ENCODE measurements at regions of chr11 and their contacts with region 1.

Region 1: GRCh38 chr11:28464252-28464867 is 356.2 kb downstream of the METTL15 start:
- DNase-seq: no peak
- ATAC-seq: no peak
- H3K4me3 ChIP-seq: no peak overlapping the region
- H3K27ac ChIP-seq: no peak overlapping the region
- H3K4me1 ChIP-seq: no peaks in the 10 kb centered on the region
- H3K27me3 ChIP-seq: no peaks in the 10 kb centered on the region
- CTCF ChIP-seq: no peak

Region 2: GRCh38 chr11:28481616-28482480 is 17.5 kb after region 1 on chr11:
- intact Hi-C with region 1: loop called in 1 of 10 experiments (anchors 2 kb)
- DNase-seq: no peak
- ATAC-seq: no peak
- H3K4me3 ChIP-seq: no peak overlapping the region
- H3K27ac ChIP-seq: no peak overlapping the region
- H3K4me1 ChIP-seq: peaks cover 0 to 1% (median 0%) of the 10 kb centered on the region in 9 donors
- H3K27me3 ChIP-seq: no peaks in the 10 kb centered on the region
- CTCF ChIP-seq: no peak

Region 3: DNA sequence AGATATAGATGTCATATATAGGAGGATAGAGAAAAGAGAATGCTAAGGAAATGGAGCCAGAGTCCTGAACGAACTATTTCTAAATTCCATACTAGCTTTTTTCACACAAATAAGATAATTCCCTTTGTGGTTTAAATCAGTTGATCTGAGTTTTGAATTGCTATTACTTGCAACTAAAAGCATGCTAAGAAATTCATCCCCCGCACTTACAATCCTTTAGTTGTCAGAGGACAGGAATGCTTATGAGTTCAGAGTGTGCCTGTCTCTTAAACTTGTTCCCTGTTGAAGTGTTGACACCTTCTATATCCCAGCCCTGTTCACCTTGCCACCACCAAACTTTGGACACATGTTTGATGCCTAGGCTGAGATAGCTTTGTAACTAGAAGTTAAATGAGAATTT is 50.0 kb after region 1 on chr11:
- intact Hi-C with region 1: no loop called
- DNase-seq: no peak
- ATAC-seq: no peak
- H3K4me3 ChIP-seq: no peak overlapping the region
- H3K27ac ChIP-seq: no peak overlapping the region
- H3K4me1 ChIP-seq: no peaks in the 10 kb centered on the region
- H3K27me3 ChIP-seq: no peaks in the 10 kb centered on the region
- CTCF ChIP-seq: no peak